GM10248 (cell line): ENCODE measurements at regions of chr17 and their contacts with region 1.

Region 1: GRCh38 chr17:78140169-78140976 is 5.8 kb upstream of the C17orf99 start:
- DNase-seq: peak; percentile 97
- CTCF ChIP-seq: no peak

Region 2: DNA sequence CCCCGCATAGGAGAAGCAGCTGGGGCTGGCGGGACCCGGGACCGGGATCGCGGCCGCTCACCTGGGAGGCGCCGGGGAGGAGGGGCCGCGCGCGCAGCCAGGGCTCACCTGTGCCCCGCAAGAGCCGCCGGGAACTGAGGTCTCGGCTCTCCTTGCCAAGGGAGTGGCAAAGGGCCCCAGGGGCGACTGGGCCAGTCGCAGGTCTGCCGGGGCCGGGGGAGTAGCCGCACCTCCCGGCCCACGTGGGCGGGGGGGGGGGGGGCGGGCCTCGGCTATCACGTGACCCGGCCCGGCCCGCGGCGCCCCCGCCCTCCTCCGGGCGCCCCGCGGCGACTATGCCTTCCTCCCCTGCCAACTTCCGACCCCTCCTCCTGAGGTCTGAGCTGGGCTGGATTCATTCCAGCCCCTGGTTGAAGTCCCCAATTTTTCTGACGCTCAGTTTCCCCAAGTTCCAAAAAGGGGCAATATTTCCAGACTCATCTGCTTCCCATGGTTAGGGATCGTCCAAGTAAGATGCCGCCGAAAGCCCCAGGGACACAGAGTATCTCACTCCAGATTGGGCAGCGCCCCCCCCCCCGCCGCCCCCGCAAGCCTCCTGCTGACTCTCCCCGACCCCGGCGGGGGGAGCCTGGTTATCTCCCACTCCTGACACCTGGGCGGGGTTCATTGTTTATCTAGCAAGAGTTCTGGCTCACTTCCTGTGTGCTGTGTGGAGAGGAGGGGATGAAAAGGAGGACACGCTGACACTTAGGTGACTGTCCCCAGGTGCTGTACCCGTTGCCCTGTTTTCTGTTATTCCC is 11.6 kb before region 1 on chr17 and contains the start of gene TMC6:
- CTCF ChIA-PET with region 1: interaction called, 22 read pairs
- POLR2A ChIA-PET with region 1: interaction called, 4 read pairs
- DNase-seq: peak; percentile 89
- CTCF ChIP-seq: no peak